GM10248 (cell line): ENCODE measurements at regions of chr1 and their contacts with region 1.

Region 1: GRCh38 chr1:200258447-200259375 is 151.1 kb downstream of the ZNF281 start:
- DNase-seq: peak; percentile 37
- CTCF ChIP-seq: peak; percentile 33

Region 2: GRCh38 chr1:200240656-200241055 is 18.1 kb before region 1 on chr1:
- CTCF ChIA-PET with region 1: interaction called, 10 read pairs
- POLR2A ChIA-PET with region 1: no interaction called
- DNase-seq: no peak
- CTCF ChIP-seq: no peak

Region 3: DNA sequence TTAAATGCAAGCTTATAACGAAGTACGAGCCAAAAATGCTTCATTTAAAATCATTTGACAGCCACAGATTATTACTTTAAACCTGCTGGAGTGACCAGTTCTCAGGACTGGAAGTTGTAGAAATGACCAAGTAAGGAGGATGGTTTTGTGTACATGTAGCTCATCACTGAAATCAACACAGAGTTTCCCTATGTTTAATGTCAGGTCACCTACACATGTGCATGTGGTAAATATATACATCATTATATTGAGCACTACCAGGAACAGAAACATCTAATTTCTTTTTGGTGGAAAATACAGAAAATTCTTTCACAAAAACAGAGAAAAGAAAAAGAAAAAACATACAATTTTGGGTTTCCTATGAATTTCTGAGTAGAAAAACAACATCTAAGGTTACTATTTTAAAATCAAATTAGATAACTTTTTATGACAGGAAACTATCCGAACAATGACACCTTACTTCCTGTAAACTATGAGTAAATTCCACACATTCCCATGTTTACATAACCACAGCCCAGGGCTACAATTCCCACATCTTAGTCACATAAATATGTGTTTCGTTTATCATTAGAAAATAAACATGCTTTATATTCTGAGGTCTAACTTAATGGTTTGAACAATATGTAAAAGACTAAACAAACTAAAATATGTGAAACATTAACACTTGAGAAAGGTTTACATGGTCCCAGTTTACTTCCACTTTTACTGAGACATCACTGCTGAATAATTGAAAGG is 77.6 kb after region 1 on chr1:
- CTCF ChIA-PET with region 1: no interaction called
- POLR2A ChIA-PET with region 1: no interaction called
- DNase-seq: no peak
- CTCF ChIP-seq: no peak